ENCODE measurements at regions of chr2 and their contacts with region 1.

Region 1: GRCh38 chr2:55917678-55918390 is 5.7 kb downstream of the EFEMP1 start:
- DNase-seq: no peak
- ATAC-seq: no peak
- H3K4me3 ChIP-seq: no peak overlapping the region
- H3K27ac ChIP-seq: no peak overlapping the region
- H3K4me1 ChIP-seq: peaks cover 0 to 9% (median 0%) of the 10 kb centered on the region in 12 donors
- H3K27me3 ChIP-seq: peaks cover 0 to 12% (median 0%) of the 10 kb centered on the region in 9 donors
- CTCF ChIP-seq: no peak
- POLR2A ChIP-seq: no peak

Region 2: GRCh38 chr2:55949613-55950012 is 31.8 kb after region 1 on chr2:
- intact Hi-C with region 1: loop called in 1 of 10 experiments (anchors 2 kb)
- DNase-seq: no peak
- ATAC-seq: no peak
- H3K4me3 ChIP-seq: no peak overlapping the region
- H3K27ac ChIP-seq: no peak overlapping the region
- H3K4me1 ChIP-seq: peaks cover 0 to 17% (median 0%) of the 10 kb centered on the region in 12 donors
- H3K27me3 ChIP-seq: no peaks in the 10 kb centered on the region
- CTCF ChIP-seq: no peak
- POLR2A ChIP-seq: no peak

Region 3: DNA sequence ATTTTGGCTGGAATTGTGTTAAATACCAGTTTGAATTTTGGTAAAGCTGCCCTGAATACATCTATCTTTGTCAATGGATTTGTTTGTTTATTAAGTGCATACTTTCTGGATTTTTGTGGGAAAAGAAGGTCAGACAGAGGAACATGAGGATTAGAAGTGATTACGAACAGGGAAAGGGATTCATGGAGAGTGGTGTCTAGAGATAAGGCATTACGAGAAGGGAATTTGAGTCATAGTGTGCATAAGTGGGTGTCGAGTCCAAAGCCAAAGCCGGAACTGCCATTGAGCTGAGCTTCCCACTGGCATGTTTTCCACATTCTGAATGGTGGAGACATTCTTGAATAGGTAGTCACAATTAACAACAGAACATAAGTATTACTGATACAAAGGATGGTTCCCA is 74.6 kb after region 1 on chr2:
- intact Hi-C with region 1: no loop called
- DNase-seq: peak in 3 of 5 donors; percentile 11 to 48 (median 26)
- ATAC-seq: peak; percentile 55 to 97 (median 92)
- H3K4me3 ChIP-seq: no peak overlapping the region
- H3K27ac ChIP-seq: peak overlapping the region in 2 of 12 donors; percentile 40 to 58
- H3K4me1 ChIP-seq: peaks cover 0 to 5% (median 0%) of the 10 kb centered on the region in 12 donors
- H3K27me3 ChIP-seq: no peaks in the 10 kb centered on the region
- CTCF ChIP-seq: no peak
- POLR2A ChIP-seq: no peak